Activated B cell treated with CpG ODN at 0.5 μM for 24 hours (primary cell): ENCODE measurements at regions of chr7 and their contacts with region 1.

Region 1: DNA sequence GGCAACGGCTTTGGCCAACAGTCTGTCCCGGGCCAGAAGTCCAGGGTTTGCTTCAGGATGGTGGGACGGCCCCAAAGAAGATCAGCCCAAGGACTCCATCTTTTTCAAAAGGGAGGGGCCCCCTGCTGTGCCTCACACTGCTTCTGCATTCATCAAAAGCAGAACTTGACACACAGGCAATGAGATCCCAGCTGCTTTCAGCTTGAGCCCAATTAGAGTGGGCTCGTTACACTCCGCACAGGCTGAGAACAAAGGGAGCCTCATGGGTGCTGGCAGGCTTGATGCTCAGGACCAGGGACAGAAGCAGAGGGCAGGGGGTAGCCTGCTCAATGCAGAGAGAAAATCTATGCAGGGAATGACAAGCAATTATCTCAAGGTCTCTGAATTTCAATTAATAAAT is 45.5 kb downstream of the VOPP1 start:
- DNase-seq: no peak
- ATAC-seq: peak; percentile 91
- H3K4me3 Mint-ChIP-seq: peak overlapping the region; percentile 74
- H3K27ac Mint-ChIP-seq: peak overlapping the region; percentile 92
- H3K4me1 Mint-ChIP-seq: peaks cover 91% of the 10 kb centered on the region
- H3K27me3 Mint-ChIP-seq: no peaks in the 10 kb centered on the region
- CTCF ChIP-seq: no peak

Region 2: DNA sequence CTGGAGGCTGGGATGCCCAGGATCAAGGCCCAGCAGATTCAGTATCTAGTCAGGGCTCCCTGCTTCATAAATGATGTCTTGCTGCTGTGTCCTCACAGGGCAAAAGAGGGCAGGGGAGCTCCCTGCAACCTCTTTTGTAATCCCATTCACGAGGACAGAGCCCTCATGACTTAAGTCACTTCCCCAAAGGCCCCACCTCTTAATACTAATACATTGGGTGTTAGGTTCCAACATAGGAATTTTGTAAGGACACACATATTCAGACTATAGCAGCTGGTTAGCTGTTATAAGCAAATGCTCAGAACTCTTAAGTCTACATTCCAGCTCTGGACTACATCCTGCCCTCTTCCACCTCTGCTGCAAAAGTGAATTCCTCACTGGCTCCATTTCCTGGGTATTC is 17.4 kb before region 1 on chr7:
- CTCF ChIA-PET with region 1: interaction called, 3 read pairs
- POLR2A ChIA-PET with region 1: interaction called, 357 read pairs
- intact Hi-C with region 1: loop called (anchors 2 kb)
- DNase-seq: no peak
- ATAC-seq: no peak
- H3K4me3 Mint-ChIP-seq: peak overlapping the region; percentile 19
- H3K27ac Mint-ChIP-seq: peak overlapping the region; percentile 73
- H3K4me1 Mint-ChIP-seq: peaks cover 88% of the 10 kb centered on the region
- H3K27me3 Mint-ChIP-seq: no peaks in the 10 kb centered on the region
- CTCF ChIP-seq: no peak

Region 3: DNA sequence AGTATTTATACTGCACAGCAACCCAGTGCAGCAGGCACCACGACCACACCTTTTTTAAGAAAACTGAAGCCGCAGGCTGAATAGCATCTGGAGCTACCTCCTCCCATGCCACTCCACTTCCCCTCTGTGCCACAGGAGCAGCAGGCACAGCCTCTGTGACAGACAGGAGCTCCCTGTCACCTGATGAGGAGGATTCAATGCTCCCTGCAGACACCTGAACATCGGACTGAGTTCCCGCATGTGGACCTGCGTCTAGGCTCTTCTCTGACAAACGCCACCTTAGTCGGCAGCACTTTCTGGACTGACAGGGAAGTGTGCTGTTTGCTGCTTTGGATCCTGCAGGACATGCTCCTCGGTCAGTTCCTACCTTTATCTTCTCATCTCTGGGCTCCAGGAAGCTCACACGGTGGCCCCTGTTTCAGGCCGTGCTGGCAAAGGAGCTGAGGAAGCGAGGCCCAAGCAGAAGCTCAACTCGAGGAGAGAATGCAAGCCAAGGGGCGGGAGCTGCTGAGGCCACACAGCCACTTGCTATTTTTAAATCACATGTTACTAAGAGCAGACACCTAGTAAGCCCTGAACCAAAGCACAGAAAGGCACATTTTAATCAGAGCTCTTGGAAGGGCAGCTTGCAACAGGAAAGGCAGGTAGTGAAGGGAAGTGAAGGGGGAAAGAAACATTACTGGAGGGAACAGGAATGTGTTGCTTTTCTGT is 11.0 kb before region 1 on chr7:
- CTCF ChIA-PET with region 1: interaction called, 4 read pairs
- POLR2A ChIA-PET with region 1: interaction called, 357 read pairs
- intact Hi-C with region 1: loop called (anchors 1 kb)
- DNase-seq: no peak
- ATAC-seq: peak; percentile 21
- H3K4me3 Mint-ChIP-seq: peak overlapping the region; percentile 66
- H3K27ac Mint-ChIP-seq: peak overlapping the region; percentile 85
- H3K4me1 Mint-ChIP-seq: peaks cover 95% of the 10 kb centered on the region
- H3K27me3 Mint-ChIP-seq: no peaks in the 10 kb centered on the region
- CTCF ChIP-seq: no peak

Region 4: GRCh38 chr7:55567571-55567970 is 40.8 kb after region 1 on chr7:
- CTCF ChIA-PET with region 1: interaction called, 4 read pairs
- POLR2A ChIA-PET with region 1: interaction called, 651 read pairs
- intact Hi-C with region 1: no loop called
- DNase-seq: no peak
- ATAC-seq: no peak
- H3K4me3 Mint-ChIP-seq: peak overlapping the region; percentile 97
- H3K27ac Mint-ChIP-seq: peak overlapping the region; percentile 93
- H3K4me1 Mint-ChIP-seq: peaks cover 76% of the 10 kb centered on the region
- H3K27me3 Mint-ChIP-seq: no peaks in the 10 kb centered on the region
- CTCF ChIP-seq: no peak